Activated B cell treated with CpG ODN at 0.5 μM for 24 hours (primary cell): ENCODE measurements at regions of chr19 and their contacts with region 1.

Region 1: GRCh38 chr19:58326914-58327726 is at the start of gene ZSCAN22:
- DNase-seq: peak; percentile 82
- ATAC-seq: peak; percentile 88
- H3K4me3 Mint-ChIP-seq: no peak within 1 kb of the TSS
- H3K27ac Mint-ChIP-seq: no peak within 1 kb of the TSS
- H3K4me1 Mint-ChIP-seq: peaks cover 2% of the 10 kb centered on the region
- H3K27me3 Mint-ChIP-seq: no peaks in the 10 kb centered on the region
- CTCF ChIP-seq: no peak
- total RNA-seq, gene ZSCAN22: 4.7 and 4.8 TPM in 2 replicates

Region 2: GRCh38 chr19:58097781-58098681 is 229.1 kb before region 1 on chr19 and contains the start of gene ZSCAN18:
- CTCF ChIA-PET with region 1: no interaction called
- POLR2A ChIA-PET with region 1: no interaction called
- intact Hi-C with region 1: loop called (anchors 2 kb)
- DNase-seq: peak; percentile 98
- ATAC-seq: peak; percentile 93
- H3K4me3 Mint-ChIP-seq: peak within 1 kb of the TSS; percentile 90
- H3K27ac Mint-ChIP-seq: peak within 1 kb of the TSS; percentile 100
- H3K4me1 Mint-ChIP-seq: peaks cover 18% of the 10 kb centered on the region
- H3K27me3 Mint-ChIP-seq: no peaks in the 10 kb centered on the region
- CTCF ChIP-seq: no peak
- total RNA-seq, gene ZSCAN18: 40.8 and 49.8 TPM in 2 replicates

Region 3: DNA sequence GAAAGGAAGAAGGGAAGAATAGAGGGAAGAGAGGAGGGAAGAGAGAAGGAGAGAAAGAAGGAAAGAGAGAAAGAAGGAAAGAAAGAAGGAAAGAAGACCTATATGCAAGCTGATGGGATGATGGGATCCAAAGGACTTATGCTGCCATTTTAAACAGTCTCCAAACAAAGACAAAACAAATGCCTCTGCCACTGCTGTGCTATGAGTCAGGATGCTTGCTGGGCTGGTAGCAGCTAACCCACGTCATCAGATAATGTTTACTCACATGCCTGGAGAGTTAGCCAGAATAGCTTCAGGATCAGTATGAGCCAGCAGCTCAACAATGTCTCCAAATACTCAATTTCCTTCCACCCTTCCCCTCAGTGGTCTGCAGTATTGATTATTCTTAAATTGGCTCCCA is 156.3 kb before region 1 on chr19:
- CTCF ChIA-PET with region 1: no interaction called
- POLR2A ChIA-PET with region 1: no interaction called
- intact Hi-C with region 1: no loop called
- DNase-seq: no peak
- ATAC-seq: no peak
- H3K4me3 Mint-ChIP-seq: no peak overlapping the region
- H3K27ac Mint-ChIP-seq: no peak overlapping the region
- H3K4me1 Mint-ChIP-seq: no peaks in the 10 kb centered on the region
- H3K27me3 Mint-ChIP-seq: peaks cover 7% of the 10 kb centered on the region
- CTCF ChIP-seq: no peak

Region 4: DNA sequence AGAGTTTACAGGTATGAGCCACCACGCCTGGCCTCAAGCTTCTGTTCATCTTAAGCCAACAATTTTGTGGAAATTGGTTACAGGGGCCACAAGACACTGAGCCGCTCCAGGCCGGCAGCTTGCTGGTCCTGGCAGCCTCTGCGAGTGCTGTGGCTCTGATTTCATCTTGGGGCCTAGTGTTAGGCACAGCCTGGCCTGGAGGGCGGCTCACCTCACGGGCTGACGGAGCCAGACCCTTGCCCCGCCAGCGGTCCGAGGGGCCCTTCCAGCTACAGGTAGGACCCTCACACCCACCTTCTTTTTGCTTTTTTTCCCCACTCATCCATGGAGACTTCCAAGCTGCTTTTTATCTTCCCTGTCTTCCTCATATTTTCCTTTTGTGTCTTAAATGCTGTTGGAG is 89.8 kb before region 1 on chr19:
- CTCF ChIA-PET with region 1: no interaction called
- POLR2A ChIA-PET with region 1: no interaction called
- intact Hi-C with region 1: no loop called
- DNase-seq: no peak
- ATAC-seq: no peak
- H3K4me3 Mint-ChIP-seq: no peak overlapping the region
- H3K27ac Mint-ChIP-seq: no peak overlapping the region
- H3K4me1 Mint-ChIP-seq: no peaks in the 10 kb centered on the region
- H3K27me3 Mint-ChIP-seq: no peaks in the 10 kb centered on the region
- CTCF ChIP-seq: no peak

Region 5: DNA sequence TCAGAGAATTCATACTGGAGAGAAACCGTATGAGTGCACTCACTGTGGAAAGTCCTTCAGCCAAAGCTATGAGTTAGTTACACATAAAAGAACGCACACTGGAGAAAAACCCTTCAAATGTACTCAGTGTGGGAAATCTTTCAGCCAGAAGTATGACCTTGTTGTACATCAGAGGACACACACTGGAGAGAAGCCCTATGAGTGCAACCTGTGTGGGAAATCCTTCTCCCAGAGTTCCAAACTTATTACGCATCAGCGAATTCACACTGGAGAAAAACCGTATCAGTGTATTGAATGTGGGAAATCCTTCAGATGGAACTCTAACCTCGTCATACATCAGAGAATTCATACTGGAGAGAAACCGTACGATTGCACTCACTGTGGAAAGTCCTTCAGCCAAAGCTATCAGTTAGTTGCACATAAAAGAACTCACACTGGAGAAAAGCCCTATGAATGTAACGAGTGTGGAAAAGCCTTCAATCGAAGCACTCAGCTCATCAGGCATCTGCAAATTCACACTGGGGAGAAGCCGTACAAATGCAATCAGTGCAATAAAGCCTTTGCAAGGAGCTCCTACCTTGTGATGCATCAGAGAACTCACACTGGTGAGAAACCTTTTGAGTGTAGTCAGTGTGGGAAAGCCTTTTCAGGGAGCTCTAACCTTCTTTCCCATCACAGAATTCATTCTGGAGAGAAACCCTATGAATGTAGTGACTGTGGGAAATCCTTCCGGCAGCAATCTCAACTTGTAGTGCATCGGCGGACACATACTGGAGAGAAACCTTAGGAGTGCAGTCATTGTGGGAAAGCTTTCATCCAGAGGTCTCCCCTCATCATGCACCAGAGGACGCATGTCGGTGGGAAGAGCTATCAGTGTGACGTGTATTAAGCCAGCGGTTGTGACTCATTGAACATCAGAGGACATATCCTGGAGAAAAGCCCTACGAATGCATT is 64.9 kb before region 1 on chr19:
- CTCF ChIA-PET with region 1: no interaction called
- POLR2A ChIA-PET with region 1: no interaction called
- intact Hi-C with region 1: no loop called
- DNase-seq: no peak
- ATAC-seq: no peak
- H3K4me3 Mint-ChIP-seq: no peak overlapping the region
- H3K27ac Mint-ChIP-seq: no peak overlapping the region
- H3K4me1 Mint-ChIP-seq: no peaks in the 10 kb centered on the region
- H3K27me3 Mint-ChIP-seq: no peaks in the 10 kb centered on the region
- CTCF ChIP-seq: no peak

Region 6: GRCh38 chr19:58305065-58305931 is 21.8 kb before region 1 on chr19 and contains the start of gene ERVK3-1:
- CTCF ChIA-PET with region 1: interaction called, 3 read pairs
- POLR2A ChIA-PET with region 1: interaction called, 23 read pairs
- intact Hi-C with region 1: loop called (anchors 1 kb)
- DNase-seq: peak; percentile 89
- ATAC-seq: peak; percentile 97
- H3K4me3 Mint-ChIP-seq: peak within 1 kb of the TSS; percentile 100
- H3K27ac Mint-ChIP-seq: peak within 1 kb of the TSS; percentile 98
- H3K4me1 Mint-ChIP-seq: peaks cover 38% of the 10 kb centered on the region
- H3K27me3 Mint-ChIP-seq: no peaks in the 10 kb centered on the region
- CTCF ChIP-seq: no peak
- total RNA-seq, gene ERVK3-1: 61.4 and 74.3 TPM in 2 replicates

Region 7: DNA sequence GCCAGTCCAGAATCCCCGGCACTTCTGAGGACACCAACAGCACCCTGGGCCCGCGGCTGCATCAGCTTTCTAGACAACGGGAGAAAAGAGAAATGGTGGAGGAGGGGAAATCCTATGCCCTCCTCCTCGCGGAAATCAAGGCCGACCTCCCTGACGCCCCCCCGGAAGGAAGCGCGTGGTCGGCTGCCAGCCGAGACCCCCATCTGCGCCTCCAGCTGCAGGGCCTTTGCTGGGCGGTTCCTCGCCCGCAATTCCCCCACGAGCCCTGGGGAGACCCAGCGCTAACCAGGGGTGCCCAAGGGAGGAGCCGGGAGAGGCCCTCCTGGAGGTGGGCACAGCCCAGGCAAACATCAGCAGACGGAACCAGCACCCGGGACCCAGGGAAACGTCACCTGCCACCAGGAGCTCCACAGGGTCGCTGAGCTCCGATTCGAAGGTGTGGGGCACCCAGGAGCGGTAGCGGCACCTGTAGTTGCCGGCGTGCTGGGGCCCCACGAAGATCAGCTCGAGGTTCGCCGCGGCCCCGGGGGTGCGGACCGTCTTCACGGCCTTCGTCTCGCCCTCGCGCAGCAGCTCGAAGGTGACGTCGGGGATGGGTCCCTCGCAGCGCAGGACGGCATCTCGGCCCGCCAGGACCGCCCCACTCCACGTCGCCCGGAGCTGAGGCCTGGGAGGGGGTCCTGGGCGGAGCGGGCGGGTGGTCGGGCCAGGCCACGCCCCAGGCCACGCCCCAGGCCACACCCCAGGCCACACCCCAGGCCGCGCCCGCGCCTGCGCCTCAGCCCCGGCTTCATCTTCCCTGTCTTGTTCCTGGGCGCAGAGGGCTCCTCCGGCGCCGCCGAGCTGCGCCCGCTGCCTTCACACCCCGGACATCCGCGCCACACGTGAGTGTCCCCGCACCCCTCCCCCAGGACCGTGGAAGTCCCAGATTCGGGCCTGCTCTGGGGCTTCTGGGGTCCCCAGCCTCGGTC is 20.1 kb after region 1 on chr19:
- CTCF ChIA-PET with region 1: no interaction called
- POLR2A ChIA-PET with region 1: interaction called, 26 read pairs
- intact Hi-C with region 1: loop called (anchors 1 kb)
- DNase-seq: peak; percentile 84
- ATAC-seq: peak; percentile 93
- H3K4me3 Mint-ChIP-seq: peak overlapping the region; percentile 93
- H3K27ac Mint-ChIP-seq: peak overlapping the region; percentile 76
- H3K4me1 Mint-ChIP-seq: peaks cover 30% of the 10 kb centered on the region
- H3K27me3 Mint-ChIP-seq: no peaks in the 10 kb centered on the region
- CTCF ChIP-seq: no peak

Region 8: DNA sequence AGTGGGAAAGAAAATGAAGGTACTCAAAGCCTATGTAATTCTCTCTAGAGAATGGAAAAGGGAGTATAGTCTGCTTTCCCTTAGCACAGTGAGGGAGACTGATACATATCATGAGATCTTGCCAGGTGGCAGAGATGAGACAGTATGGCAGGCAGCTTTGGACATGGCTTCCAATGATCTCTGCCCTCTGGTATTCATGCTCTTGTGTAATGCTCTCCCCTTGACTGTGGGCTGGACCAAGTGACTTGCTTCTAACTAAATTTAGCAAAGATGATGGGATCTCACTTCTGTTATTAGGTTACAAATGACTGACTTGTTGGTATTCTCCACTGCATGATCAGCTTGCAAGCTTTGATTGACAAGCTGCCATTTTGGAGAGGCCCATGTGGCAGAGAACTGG is 102.6 kb after region 1 on chr19:
- CTCF ChIA-PET with region 1: no interaction called
- POLR2A ChIA-PET with region 1: no interaction called
- intact Hi-C with region 1: no loop called
- DNase-seq: no peak
- ATAC-seq: no peak
- H3K4me3 Mint-ChIP-seq: no peak overlapping the region
- H3K27ac Mint-ChIP-seq: no peak overlapping the region
- H3K4me1 Mint-ChIP-seq: no peaks in the 10 kb centered on the region
- H3K27me3 Mint-ChIP-seq: no peaks in the 10 kb centered on the region
- CTCF ChIP-seq: no peak

Region 9: DNA sequence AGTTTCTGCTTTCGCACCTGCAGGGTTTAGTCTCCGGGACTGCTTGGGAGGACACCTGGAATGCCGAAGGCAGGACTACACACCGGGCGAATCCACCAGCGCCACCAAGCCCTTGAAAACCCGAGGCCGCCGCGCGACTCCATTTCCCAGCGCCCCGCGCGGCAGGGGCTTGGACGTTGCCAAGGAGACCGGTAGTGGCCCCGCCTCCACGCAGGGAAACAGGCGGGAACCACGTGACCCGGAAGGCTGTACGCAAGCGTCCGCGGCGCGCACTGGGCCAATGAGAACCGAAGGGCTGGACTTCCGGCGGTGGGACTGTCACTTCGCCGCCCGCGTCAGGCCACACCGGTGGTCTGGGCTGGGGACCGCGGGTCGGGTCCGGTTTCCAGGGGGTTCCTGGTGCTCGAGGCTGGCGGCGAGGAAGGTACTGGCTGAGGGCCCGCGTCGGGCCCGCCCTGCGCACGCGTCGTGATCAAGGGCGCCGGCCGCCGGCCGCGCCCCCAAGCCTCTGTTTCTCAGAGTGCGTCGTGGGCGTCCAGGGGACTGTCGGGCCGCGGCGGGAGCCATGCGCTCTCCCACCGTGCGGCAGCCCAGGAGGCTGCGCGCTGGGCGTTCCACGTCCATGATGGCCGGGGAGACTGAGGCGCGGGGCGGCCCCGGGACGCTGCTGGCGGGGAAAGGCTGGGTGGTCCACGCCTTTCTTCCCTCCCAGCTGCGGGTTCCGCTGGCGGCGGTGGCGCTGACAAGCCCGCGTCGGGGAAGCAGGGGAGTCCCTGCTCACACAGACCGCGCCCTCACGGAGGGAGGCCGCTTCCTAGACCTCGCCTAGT is 139.9 kb after region 1 on chr19 and contains the start of gene ZNF324:
- CTCF ChIA-PET with region 1: no interaction called
- POLR2A ChIA-PET with region 1: interaction called, 12 read pairs
- intact Hi-C with region 1: loop called (anchors 2 kb)
- DNase-seq: peak; percentile 95
- ATAC-seq: peak; percentile 92
- H3K4me3 Mint-ChIP-seq: peak within 1 kb of the TSS; percentile 81
- H3K27ac Mint-ChIP-seq: peak within 1 kb of the TSS; percentile 56
- H3K4me1 Mint-ChIP-seq: peaks cover 26% of the 10 kb centered on the region
- H3K27me3 Mint-ChIP-seq: no peaks in the 10 kb centered on the region
- CTCF ChIP-seq: no peak
- total RNA-seq, gene ZNF324: 11.8 and 13.1 TPM in 2 replicates

Region 10: GRCh38 chr19:58475714-58476497 is 148.8 kb after region 1 on chr19 and contains the start of gene ZNF446:
- CTCF ChIA-PET with region 1: no interaction called
- POLR2A ChIA-PET with region 1: interaction called, 4 read pairs
- intact Hi-C with region 1: loop called (anchors 2 kb)
- DNase-seq: peak; percentile 91
- ATAC-seq: peak; percentile 88
- H3K4me3 Mint-ChIP-seq: peak within 1 kb of the TSS; percentile 94
- H3K27ac Mint-ChIP-seq: peak within 1 kb of the TSS; percentile 95
- H3K4me1 Mint-ChIP-seq: peaks cover 20% of the 10 kb centered on the region
- H3K27me3 Mint-ChIP-seq: no peaks in the 10 kb centered on the region
- CTCF ChIP-seq: no peak
- total RNA-seq, gene ZNF446: 9.6 and 10.4 TPM in 2 replicates